Mammary epithelial cell (primary cell): ENCODE measurements at regions of chr12 and their contacts with region 1.

Region 1: DNA sequence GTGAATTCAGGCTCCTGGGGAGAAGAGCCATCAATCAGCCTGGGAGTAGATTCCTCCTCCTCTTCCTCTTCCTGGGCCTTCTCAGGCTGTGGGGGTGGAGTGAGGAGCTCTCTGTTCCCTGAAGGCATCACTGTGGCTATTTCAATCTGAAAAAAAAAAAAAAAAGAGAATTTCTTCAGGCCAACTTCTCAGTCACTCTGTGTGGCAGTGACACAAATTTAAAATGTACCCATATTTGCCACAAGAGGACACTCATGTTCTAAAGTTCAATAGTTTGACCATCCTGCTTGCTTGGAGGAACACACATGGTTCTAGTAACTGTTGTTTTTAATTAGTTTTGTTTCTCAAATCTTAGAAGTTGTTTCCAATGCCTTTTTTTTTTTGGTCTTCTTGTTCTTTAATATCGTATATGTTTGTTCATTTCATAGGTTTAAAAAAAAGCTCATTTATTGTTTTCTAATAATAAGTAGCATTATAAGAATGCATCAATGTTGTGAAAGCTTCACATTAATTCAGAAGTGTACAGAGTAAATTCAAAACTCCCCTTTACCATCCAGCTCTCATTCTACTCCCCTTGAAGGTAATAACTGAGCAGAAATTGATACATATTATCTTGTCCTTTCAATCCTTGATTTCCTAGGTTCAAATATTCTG is 23.3 kb upstream of the CCER1 start:
- DNase-seq: peak; percentile 35
- H3K4me3 ChIP-seq: no peak overlapping the region
- H3K27ac ChIP-seq: no peak overlapping the region
- H3K4me1 ChIP-seq: peaks cover 8% of the 10 kb centered on the region
- H3K27me3 ChIP-seq: no peaks in the 10 kb centered on the region
- CTCF ChIP-seq: peak; percentile 68 to 69

Region 2: GRCh38 chr12:91109148-91109564 is 130.9 kb after region 1 on chr12:
- CTCF ChIA-PET with region 1: interaction called, 17 read pairs
- dilution Hi-C with region 1: no loop called
- in situ Hi-C with region 1: loop called (anchors 10 kb)
- intact Hi-C with region 1: loop called (anchors 1 kb)
- DNase-seq: peak; percentile 47
- H3K4me3 ChIP-seq: no peak overlapping the region
- H3K27ac ChIP-seq: no peak overlapping the region
- H3K4me1 ChIP-seq: no peaks in the 10 kb centered on the region
- H3K27me3 ChIP-seq: no peaks in the 10 kb centered on the region
- CTCF ChIP-seq: peak; percentile 72 to 79

Region 3: DNA sequence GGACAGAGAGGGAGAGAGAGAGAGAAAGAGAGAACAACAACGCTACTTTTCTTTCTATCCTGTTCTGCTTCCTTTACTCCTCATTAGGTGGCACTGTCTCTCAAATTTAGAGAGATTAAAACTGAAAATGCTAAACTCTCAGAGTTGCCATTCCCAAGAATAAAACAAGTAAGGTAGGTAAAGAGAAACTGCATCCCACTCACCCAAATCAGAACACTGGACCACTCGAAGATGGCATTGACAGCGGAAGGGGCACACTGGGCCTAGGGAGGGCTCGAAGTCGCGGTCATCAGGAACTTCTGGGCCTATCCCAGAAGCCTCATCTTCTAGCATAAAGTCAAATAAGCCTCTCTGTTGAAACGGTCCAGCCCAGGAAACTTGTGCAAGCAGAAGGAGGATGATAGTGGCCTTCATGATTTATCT is 199.9 kb after region 1 on chr12:
- CTCF ChIA-PET with region 1: no interaction called
- dilution Hi-C with region 1: no loop called
- in situ Hi-C with region 1: no loop called
- intact Hi-C with region 1: loop called (anchors 5 kb)
- DNase-seq: peak; percentile 6
- H3K4me3 ChIP-seq: peak overlapping the region in 1 of 3 experiments; percentile 23
- H3K27ac ChIP-seq: no peak overlapping the region
- H3K4me1 ChIP-seq: no peaks in the 10 kb centered on the region
- H3K27me3 ChIP-seq: peaks cover 2% of the 10 kb centered on the region
- CTCF ChIP-seq: peak; percentile 35 to 64

Region 4: GRCh38 chr12:91239481-91239880 is 261.2 kb after region 1 on chr12:
- CTCF ChIA-PET with region 1: no interaction called
- dilution Hi-C with region 1: no loop called
- in situ Hi-C with region 1: no loop called
- intact Hi-C with region 1: loop called (anchors 2 kb)
- DNase-seq: no peak
- H3K4me3 ChIP-seq: no peak overlapping the region
- H3K27ac ChIP-seq: no peak overlapping the region
- H3K4me1 ChIP-seq: no peaks in the 10 kb centered on the region
- H3K27me3 ChIP-seq: peaks cover 3% of the 10 kb centered on the region
- CTCF ChIP-seq: no peak

Region 5: GRCh38 chr12:91326058-91327027 is 348.1 kb after region 1 on chr12:
- CTCF ChIA-PET with region 1: no interaction called
- dilution Hi-C with region 1: no loop called
- in situ Hi-C with region 1: loop called in 1 of 2 experiments (anchors 25 kb)
- intact Hi-C with region 1: loop called (anchors 2 kb)
- DNase-seq: peak; percentile 26
- H3K4me3 ChIP-seq: no peak overlapping the region
- H3K27ac ChIP-seq: no peak overlapping the region
- H3K4me1 ChIP-seq: no peaks in the 10 kb centered on the region
- H3K27me3 ChIP-seq: peaks cover 1% of the 10 kb centered on the region
- CTCF ChIP-seq: peak; percentile 78 to 79

Region 6: DNA sequence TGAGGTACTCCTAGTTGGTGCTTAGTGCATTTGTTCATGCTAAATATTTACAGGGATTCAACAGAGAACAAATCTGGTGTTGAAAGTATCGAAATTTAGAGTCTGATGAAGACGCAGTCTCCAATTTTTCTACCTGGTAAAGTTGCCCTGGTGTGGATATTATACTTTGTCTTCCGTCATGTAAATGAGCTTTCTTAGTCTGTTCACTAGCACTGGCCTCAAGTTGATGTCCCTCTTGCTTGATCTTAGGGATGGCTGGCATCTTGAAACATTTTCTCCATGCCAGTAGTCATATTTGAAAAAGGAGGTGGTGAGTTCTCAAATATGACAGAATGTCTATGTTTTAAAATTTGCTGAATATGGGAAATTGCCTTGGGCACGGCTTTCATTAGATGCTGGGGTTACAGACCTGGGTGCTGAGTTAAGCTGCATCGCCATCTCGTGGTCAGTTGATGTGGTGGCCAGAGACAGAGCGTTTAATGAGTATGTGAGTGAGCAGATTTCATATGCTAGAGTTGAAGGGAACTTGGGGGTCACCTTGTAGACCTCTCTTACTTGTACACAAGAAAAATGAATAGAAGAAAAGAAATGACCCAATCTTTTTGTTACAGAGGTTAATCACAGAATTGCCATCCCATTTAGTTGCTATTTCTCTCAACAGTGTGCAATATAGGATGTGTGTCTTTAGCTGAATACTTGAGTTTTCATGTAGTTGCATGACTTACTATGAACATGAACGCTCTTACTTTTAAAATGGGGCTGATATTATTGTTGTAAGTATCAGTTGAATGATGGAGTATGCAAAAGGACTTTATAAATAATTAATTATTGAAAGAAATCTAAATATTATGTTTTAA is 377.1 kb after region 1 on chr12:
- CTCF ChIA-PET with region 1: no interaction called
- dilution Hi-C with region 1: no loop called
- in situ Hi-C with region 1: no loop called
- intact Hi-C with region 1: loop called (anchors 1 kb)
- DNase-seq: peak; percentile 49
- H3K4me3 ChIP-seq: no peak overlapping the region
- H3K27ac ChIP-seq: no peak overlapping the region
- H3K4me1 ChIP-seq: no peaks in the 10 kb centered on the region
- H3K27me3 ChIP-seq: peaks cover 11% of the 10 kb centered on the region
- CTCF ChIP-seq: peak; percentile 82 to 94